Gastrocnemius medialis (tissue), 4 donors: ENCODE measurements at regions of chr6 and their contacts with region 1.

Region 1: GRCh38 chr6:152957796-152958195 is 25.0 kb downstream of the FBXO5 start:
- DNase-seq: no peak
- ATAC-seq: no peak
- H3K4me3 ChIP-seq: no peak overlapping the region
- H3K27ac ChIP-seq: no peak overlapping the region
- H3K4me1 ChIP-seq: no peaks in the 10 kb centered on the region
- H3K27me3 ChIP-seq: no peaks in the 10 kb centered on the region
- CTCF ChIP-seq: no peak
- POLR2A ChIP-seq: no peak

Region 2: DNA sequence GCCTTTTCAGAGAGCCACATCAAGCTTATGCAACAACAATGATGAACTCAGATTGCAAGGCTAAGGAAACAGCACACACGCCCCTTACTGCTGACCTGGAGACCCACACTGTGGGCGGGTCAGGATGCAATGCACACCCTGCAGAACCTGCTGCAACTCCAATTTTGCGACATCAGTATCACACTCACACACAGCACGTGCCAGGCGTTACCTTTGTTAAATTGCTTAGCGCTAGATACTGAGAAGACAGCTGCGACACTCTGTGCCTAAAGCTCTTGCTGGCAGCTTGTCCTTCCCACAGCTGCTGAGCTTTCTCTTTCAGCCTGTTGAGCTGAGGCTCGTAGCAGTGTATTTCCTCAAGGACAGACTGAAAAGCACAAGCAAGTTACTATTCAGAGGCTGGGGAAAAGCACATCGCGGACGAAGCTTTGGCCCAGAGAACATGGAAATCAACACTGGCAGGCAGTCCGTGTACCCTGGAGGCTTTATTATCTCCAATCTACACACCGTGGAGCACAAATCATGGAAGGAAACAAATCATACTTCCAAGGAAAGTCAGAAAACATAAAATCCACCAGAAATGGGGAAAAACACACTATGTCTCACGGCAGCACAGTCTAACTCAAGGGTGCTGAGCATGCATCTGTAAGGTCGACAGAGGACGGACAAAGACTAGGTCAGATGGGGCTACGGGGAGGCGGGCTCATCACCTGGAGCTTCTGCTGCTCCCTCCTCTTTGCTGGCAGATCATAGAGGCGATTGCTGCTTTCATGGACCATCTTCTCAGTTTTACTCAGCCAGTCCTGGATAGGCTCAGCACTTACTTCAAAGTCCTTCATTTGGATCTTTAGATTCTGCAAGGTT is 588.8 kb before region 1 on chr6:
- in situ Hi-C with region 1: no loop called
- intact Hi-C with region 1: no loop called
- DNase-seq: peak; percentile 70 to 88
- ATAC-seq: peak; percentile 98
- H3K4me3 ChIP-seq: peak overlapping the region; percentile 14 to 41 (median 34)
- H3K27ac ChIP-seq: peak overlapping the region; percentile 73 to 88 (median 80)
- H3K4me1 ChIP-seq: peaks cover 7 to 15% of the 10 kb centered on the region in 2 donors
- H3K27me3 ChIP-seq: no peaks in the 10 kb centered on the region
- CTCF ChIP-seq: no peak
- POLR2A ChIP-seq: peak in 1 of 2 donors; percentile 19

Region 3: DNA sequence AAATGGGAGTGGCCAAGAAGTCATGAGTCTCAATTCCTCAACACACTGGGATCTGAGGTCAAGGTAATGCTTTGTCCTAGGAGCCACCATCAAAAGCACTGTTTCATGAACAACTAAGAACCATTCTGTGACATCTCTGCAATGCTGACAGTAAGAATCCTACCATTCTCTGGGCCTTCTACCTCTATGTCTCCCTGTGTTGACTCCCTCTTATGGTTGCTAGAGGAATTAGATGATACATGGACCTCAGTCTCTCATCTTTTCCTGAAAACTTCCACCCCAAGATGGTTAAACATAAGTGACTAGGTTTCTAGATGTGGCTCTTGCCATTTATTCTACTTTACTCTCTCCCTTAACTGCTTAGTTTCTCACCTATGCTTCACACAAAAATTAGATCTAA is 35.6 kb after region 1 on chr6:
- in situ Hi-C with region 1: no loop called
- intact Hi-C with region 1: no loop called
- DNase-seq: no peak
- ATAC-seq: no peak
- H3K4me3 ChIP-seq: no peak overlapping the region
- H3K27ac ChIP-seq: no peak overlapping the region
- H3K4me1 ChIP-seq: peaks cover 0 to 8% of the 10 kb centered on the region in 2 donors
- H3K27me3 ChIP-seq: no peaks in the 10 kb centered on the region
- CTCF ChIP-seq: no peak
- POLR2A ChIP-seq: no peak

Region 4: GRCh38 chr6:153015094-153015640 is 57.4 kb after region 1 on chr6:
- in situ Hi-C with region 1: loop called in 1 of 4 experiments (anchors 5 kb)
- intact Hi-C with region 1: no loop called
- DNase-seq: no peak
- ATAC-seq: no peak
- H3K4me3 ChIP-seq: no peak overlapping the region
- H3K27ac ChIP-seq: no peak overlapping the region
- H3K4me1 ChIP-seq: no peaks in the 10 kb centered on the region
- H3K27me3 ChIP-seq: no peaks in the 10 kb centered on the region
- CTCF ChIP-seq: no peak
- POLR2A ChIP-seq: no peak